ENCODE measurements at regions of chr17 and their contacts with region 1.

Region 1: DNA sequence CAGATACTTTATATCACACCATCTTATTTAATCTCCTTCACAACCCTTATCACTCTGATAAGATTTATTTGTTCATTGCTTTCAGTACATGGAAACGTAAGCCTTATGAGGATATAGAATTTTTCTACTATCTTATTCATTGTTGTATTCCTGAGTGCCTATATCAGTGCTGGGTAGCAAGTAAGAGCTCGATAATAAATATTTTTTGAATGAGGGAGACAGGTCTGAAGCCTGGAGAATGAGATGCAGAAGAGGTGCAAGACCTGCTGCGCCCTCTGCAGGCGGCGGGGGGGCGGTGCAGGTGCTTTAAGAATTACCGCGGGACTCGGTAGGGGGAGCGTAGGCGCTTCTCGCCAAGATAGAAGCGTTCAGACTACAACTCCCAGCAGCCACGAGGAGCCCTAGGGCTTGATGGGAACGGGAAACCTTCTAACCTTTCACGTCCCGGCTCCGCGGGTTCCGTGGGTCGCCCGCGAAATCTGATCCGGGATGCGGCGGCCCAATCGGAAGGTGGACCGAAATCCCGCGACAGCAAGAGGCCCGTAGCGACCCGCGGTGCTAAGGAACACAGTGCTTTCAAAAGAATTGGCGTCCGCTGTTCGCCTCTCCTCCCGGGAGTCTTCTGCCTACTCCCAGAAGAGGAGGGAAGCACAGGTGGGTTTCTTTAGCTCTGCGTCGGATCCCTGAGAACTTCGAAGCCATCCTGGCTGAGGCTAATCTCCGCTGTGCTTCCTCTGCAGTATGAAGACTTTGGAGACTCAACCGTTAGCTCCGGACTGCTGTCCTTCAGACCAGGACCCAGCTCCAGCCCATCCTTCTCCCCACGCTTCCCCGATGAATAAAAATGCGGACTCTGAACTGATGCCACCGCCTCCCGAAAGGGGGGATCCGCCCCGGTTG is at the start of gene WRAP53:
- DNase-seq: peak; percentile 92 to 98 (median 95)
- ATAC-seq: peak; percentile 79
- H3K4me3 Mint-ChIP-seq: peak within 1 kb of the TSS; percentile 87 to 99 (median 98)
- H3K27ac Mint-ChIP-seq: peak within 1 kb of the TSS; percentile 99 to 100 (median 100)
- H3K4me1 Mint-ChIP-seq: peaks cover 25 to 51% (median 50%) of the 10 kb centered on the region in 4 donors
- H3K27me3 Mint-ChIP-seq: peaks cover 0 to 3% (median 0%) of the 10 kb centered on the region in 5 donors
- polyA plus RNA-seq, gene WRAP53: 10.5 to 14.1 (median 13.9) TPM

Region 2: GRCh38 chr17:7336240-7337175 is 351.6 kb before region 1 on chr17 and contains the start of gene ACAP1:
- POLR2A ChIA-PET with region 1: interaction called, 19 read pairs
- DNase-seq: peak; percentile 74 to 93 (median 82)
- ATAC-seq: peak; percentile 94
- H3K4me3 Mint-ChIP-seq: peak within 1 kb of the TSS; percentile 92 to 98 (median 95)
- H3K27ac Mint-ChIP-seq: peak within 1 kb of the TSS; percentile 77 to 99 (median 98)
- H3K4me1 Mint-ChIP-seq: peaks cover 26 to 69% (median 64%) of the 10 kb centered on the region in 4 donors
- H3K27me3 Mint-ChIP-seq: no peaks in the 10 kb centered on the region
- polyA plus RNA-seq, gene ACAP1: 246 to 295 (median 283) TPM

Region 3: DNA sequence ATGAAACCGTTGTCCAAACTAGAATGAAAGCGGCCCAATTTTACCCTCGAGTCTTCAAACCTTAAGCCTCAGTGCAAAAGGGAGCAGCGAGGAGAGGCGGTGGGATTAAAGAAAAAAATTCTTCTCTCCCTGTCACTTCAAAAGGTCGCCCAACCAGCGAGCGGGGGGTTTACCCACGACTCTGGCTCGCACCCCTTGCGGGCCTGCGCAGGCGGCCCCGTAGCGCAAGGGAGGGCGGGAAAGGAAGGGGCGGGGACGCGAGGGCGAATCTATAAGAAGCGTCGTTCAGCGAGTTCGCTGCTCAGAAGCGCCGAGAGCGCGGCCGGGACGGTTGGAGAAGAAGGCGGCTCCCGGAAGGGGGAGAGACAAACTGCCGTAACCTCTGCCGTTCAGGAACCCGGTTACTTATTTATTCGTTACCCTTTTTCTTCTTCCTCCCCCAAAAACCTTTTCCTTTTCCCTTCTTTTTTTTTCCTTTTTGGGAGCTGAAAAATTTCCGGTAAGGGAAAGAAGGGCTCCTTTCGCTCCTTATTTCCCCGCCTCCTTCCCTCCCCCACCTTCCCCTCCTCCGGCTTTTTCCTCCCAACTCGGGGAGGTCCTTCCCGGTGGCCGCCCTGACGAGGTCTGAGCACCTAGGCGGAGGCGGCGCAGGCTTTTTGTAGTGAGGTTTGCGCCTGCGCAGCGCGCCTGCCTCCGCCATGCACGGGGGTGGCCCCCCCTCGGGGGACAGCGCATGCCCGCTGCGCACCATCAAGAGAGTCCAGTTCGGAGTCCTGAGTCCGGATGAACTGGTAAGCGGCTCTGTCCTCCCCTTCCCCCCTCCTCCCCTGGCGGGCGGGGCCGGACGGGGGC is 203.9 kb before region 1 on chr17 and contains the start of gene POLR2A:
- POLR2A ChIA-PET with region 1: interaction called, 35 read pairs
- DNase-seq: peak; percentile 96 to 99 (median 98)
- ATAC-seq: peak; percentile 59 to 67
- H3K4me3 Mint-ChIP-seq: peak within 1 kb of the TSS; percentile 95 to 100 (median 99)
- H3K27ac Mint-ChIP-seq: peak within 1 kb of the TSS; percentile 97 to 100 (median 100)
- H3K4me1 Mint-ChIP-seq: peaks cover 46 to 80% (median 75%) of the 10 kb centered on the region in 4 donors
- H3K27me3 Mint-ChIP-seq: no peaks in the 10 kb centered on the region
- polyA plus RNA-seq, gene POLR2A: 31.1 to 68.0 (median 47.3) TPM

Region 4: GRCh38 chr17:7583253-7584109 is 104.7 kb before region 1 on chr17 and contains the start of gene MPDU1:
- POLR2A ChIA-PET with region 1: interaction called, 94 read pairs
- DNase-seq: peak; percentile 91 to 98 (median 95)
- ATAC-seq: peak; percentile 84 to 89
- H3K4me3 Mint-ChIP-seq: peak within 1 kb of the TSS; percentile 88 to 100 (median 99)
- H3K27ac Mint-ChIP-seq: peak within 1 kb of the TSS; percentile 96 to 100 (median 100)
- H3K4me1 Mint-ChIP-seq: peaks cover 30 to 69% (median 61%) of the 10 kb centered on the region in 4 donors
- H3K27me3 Mint-ChIP-seq: no peaks in the 10 kb centered on the region
- polyA plus RNA-seq, gene MPDU1: 33.9 to 48.9 (median 41.3) TPM

Region 5: DNA sequence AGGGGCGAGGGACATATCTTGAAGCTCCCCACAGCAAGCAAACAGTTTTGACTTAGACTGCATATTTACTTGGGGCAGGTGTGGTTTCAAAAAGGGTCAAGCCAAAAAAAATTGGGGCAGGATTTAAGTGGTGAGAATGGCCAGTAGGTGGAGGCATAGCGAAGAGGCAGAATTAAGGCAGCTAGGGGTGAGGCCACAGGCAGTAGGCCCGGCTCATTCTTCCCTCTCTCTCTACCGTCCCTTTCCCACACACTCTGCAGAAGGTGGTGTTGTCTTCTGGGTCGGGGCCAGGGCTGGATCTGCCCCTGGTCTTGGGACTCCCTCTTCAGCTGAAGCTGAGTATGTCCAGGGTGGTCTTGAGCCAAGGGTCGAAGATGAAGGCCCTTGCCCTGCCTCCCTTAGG is 55.7 kb before region 1 on chr17:
- POLR2A ChIA-PET with region 1: interaction called, 83 read pairs
- DNase-seq: peak in 4 of 10 donors; percentile 17 to 38 (median 35)
- ATAC-seq: no peak
- H3K4me3 Mint-ChIP-seq: no peak overlapping the region
- H3K27ac Mint-ChIP-seq: peak overlapping the region in 2 of 10 donors; percentile 27 to 50
- H3K4me1 Mint-ChIP-seq: peaks cover 2 to 6% (median 3%) of the 10 kb centered on the region in 4 donors
- H3K27me3 Mint-ChIP-seq: no peaks in the 10 kb centered on the region

Region 6: GRCh38 chr17:7856883-7857723 is 168.9 kb after region 1 on chr17 and contains the start of gene NAA38:
- POLR2A ChIA-PET with region 1: interaction called, 14 read pairs
- DNase-seq: peak; percentile 80 to 100 (median 96)
- ATAC-seq: peak; percentile 78 to 91
- H3K4me3 Mint-ChIP-seq: no peak within 1 kb of the TSS
- H3K27ac Mint-ChIP-seq: no peak within 1 kb of the TSS
- H3K4me1 Mint-ChIP-seq: peaks cover under 1 to 17% (median 12%) of the 10 kb centered on the region in 4 donors
- H3K27me3 Mint-ChIP-seq: no peaks in the 10 kb centered on the region
- polyA plus RNA-seq, gene NAA38: 125 to 169 (median 152) TPM